Activated CD4-positive, alpha-beta memory T cell treated with anti-CD3 and anti-CD28 coated beads for 36 hours (primary cell): ENCODE measurements at regions of chr2 and their contacts with region 1.

Region 1: DNA sequence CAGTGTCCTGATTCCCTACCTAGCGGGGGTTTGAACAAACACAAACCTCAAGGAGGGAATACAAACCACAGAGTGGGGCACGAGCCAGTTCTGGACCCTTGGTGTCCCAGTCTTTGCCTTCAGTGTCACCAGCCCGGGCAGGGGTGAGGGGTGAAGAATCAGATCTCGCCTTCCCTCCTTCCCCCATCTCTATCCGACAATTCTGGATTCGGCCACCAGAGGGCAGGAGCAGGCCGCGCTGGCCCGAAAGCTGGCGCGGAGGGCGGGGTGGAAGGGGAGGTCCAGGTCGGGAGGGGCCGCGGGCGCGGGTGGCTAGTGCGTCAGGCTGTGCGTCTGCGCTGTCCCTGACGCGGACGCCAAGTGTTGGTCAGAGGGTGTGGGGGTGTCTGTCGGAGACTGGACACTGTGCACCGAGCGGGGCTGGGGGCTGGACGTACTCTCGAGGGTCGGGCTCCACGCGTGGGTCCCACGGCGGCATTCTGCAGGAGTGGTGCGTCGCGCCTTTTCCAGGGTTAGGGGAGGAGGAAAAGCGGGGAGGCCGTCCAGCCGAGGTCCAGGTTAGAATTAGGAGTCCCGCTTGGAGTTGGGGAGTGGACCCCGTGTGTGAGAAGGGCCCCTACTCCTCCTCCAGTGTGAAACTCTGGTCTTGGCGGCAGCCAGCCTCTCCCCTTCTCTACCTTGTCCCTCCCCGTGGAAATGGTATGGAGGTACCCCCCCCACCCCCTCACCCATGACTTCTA is 2.9 kb upstream of the CRYBA2 start:
- DNase-seq: peak; percentile 86
- H3K4me3 Mint-ChIP-seq: no peak overlapping the region
- H3K27ac Mint-ChIP-seq: no peak overlapping the region
- H3K4me1 Mint-ChIP-seq: peaks cover 2% of the 10 kb centered on the region
- H3K27me3 Mint-ChIP-seq: peaks cover 73% of the 10 kb centered on the region

Region 2: DNA sequence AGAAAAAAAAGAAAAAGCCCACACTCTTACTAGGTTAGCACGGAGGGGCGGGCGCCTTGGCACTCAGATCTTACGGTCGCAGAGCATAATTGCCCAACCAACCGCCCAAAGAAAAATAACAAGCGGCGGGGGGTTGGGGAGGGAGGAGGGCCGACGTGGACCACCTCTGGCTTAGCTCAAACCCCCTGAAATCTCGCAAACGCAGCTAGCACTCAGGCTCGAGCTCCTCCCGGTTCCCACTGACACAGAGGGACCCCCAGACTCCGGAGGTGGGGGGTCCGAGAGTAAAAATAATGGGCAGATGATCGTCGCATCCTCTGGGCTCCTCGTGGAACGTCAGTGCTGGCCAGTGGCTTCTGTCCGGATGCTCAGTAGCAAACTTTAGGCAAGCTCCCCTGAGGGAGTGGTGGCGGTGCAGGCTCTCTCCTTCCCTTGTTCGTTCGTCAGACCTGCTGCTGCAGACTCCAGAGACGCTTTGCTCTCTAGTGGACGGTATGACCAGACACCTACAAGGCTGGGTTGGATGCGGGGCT is 627.5 kb before region 1 on chr2:
- CTCF ChIA-PET with region 1: no interaction called
- POLR2A ChIA-PET with region 1: no interaction called
- intact Hi-C with region 1: no loop called
- DNase-seq: no peak
- H3K4me3 Mint-ChIP-seq: no peak overlapping the region
- H3K27ac Mint-ChIP-seq: no peak overlapping the region
- H3K4me1 Mint-ChIP-seq: peaks cover 8% of the 10 kb centered on the region
- H3K27me3 Mint-ChIP-seq: no peaks in the 10 kb centered on the region

Region 3: GRCh38 chr2:219009294-219009693 is 13.2 kb after region 1 on chr2:
- CTCF ChIA-PET with region 1: interaction called, 11 read pairs
- POLR2A ChIA-PET with region 1: no interaction called
- intact Hi-C with region 1: no loop called
- DNase-seq: no peak
- H3K4me3 Mint-ChIP-seq: no peak overlapping the region
- H3K27ac Mint-ChIP-seq: no peak overlapping the region
- H3K4me1 Mint-ChIP-seq: no peaks in the 10 kb centered on the region
- H3K27me3 Mint-ChIP-seq: peaks cover 28% of the 10 kb centered on the region

Region 4: GRCh38 chr2:219560037-219560892 is 564.1 kb after region 1 on chr2:
- CTCF ChIA-PET with region 1: no interaction called
- POLR2A ChIA-PET with region 1: no interaction called
- intact Hi-C with region 1: no loop called
- DNase-seq: peak; percentile 21
- H3K4me3 Mint-ChIP-seq: no peak overlapping the region
- H3K27ac Mint-ChIP-seq: no peak overlapping the region
- H3K4me1 Mint-ChIP-seq: no peaks in the 10 kb centered on the region
- H3K27me3 Mint-ChIP-seq: peaks cover 15% of the 10 kb centered on the region